OCI-LY7 (cell line): ENCODE measurements at regions of chr4 and their contacts with region 1.

Region 1: DNA sequence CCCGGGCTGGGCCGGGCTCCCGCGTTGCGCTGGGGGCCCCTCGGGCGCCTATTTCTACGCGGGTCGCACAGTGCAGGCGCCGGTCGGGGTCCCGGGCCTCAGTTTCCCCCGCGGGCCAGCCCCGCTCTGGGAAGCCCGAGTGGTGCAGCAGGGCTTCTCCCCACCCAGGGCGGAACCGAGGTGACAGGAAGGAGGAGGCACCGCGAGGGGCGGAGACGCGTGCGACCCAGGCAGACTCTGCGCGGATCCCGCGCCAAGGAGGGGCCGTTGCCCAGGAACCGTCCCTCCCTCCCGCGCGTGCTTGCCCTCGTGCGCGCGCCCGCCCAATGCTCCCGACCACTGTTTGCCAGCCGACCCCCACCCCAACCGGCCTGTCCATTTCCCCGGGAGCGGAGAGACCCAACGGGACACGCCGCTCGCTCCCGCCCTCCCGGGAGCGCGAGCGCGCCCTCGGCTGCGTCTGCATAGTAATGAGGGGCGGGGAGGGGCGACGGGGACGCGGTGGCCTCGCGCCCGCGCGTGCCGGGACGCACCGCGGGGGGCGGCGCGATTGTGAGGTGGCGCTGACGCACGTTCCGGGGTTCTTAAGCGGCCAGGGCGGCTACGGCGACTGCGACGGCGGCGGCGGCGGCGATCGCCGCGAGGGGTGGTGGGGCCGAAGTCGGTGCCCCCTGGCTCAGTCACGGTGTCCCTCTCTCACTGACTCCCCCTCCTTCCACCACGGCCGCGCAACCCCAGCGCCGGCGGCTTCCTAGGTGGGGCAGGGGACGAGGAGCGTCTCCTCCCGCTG is at the start of gene CPEB2:
- DNase-seq: peak; percentile 96
- H3K4me3 ChIP-seq: peak within 1 kb of the TSS; percentile 93
- H3K27ac ChIP-seq: peak within 1 kb of the TSS; percentile 91
- H3K4me1 ChIP-seq: peaks cover 22% of the 10 kb centered on the region
- CTCF ChIP-seq: no peak
- total RNA-seq, gene CPEB2: 2.2 and 2.3 TPM in 2 replicates

Region 2: GRCh38 chr4:13627606-13628301 is 1374.3 kb before region 1 on chr4 and contains the start of gene BOD1L1:
- CTCF ChIA-PET with region 1: interaction called, 3 read pairs
- POLR2A ChIA-PET with region 1: interaction called, 3 read pairs
- intact Hi-C with region 1: loop called (anchors 5 kb)
- DNase-seq: peak; percentile 88
- H3K4me3 ChIP-seq: peak within 1 kb of the TSS; percentile 98
- H3K27ac ChIP-seq: peak within 1 kb of the TSS; percentile 56
- H3K4me1 ChIP-seq: peaks cover 18% of the 10 kb centered on the region
- CTCF ChIP-seq: peak; percentile 50
- total RNA-seq, gene BOD1L1: 24.0 and 38.8 TPM in 2 replicates

Region 3: GRCh38 chr4:14465507-14465906 is 536.6 kb before region 1 on chr4:
- CTCF ChIA-PET with region 1: no interaction called
- POLR2A ChIA-PET with region 1: no interaction called
- intact Hi-C with region 1: no loop called
- DNase-seq: no peak
- H3K4me3 ChIP-seq: no peak overlapping the region
- H3K27ac ChIP-seq: no peak overlapping the region
- H3K4me1 ChIP-seq: no peaks in the 10 kb centered on the region
- CTCF ChIP-seq: no peak

Region 4: DNA sequence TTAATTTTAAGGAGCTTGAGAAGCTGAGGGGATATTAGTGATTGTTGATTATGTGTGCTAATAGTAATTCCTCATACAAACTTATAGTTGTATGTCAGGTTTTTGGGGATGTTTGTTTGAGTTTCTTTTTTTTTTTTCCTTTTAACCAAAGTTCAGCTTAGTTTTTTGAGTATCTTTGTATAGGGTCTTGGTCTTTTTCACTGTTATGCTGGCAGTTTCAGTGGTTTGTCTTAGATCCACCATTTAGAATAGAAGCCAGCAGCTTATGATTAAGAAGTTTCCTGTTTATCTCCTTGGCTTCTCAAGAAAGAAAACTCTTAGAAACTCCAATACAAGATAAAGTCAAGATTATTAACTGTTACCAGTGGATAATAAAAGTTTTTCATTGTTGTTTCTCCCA is 16.3 kb after region 1 on chr4:
- CTCF ChIA-PET with region 1: no interaction called
- POLR2A ChIA-PET with region 1: no interaction called
- intact Hi-C with region 1: no loop called
- DNase-seq: no peak
- H3K4me3 ChIP-seq: no peak overlapping the region
- H3K27ac ChIP-seq: no peak overlapping the region
- H3K4me1 ChIP-seq: no peaks in the 10 kb centered on the region
- CTCF ChIP-seq: no peak

Region 5: DNA sequence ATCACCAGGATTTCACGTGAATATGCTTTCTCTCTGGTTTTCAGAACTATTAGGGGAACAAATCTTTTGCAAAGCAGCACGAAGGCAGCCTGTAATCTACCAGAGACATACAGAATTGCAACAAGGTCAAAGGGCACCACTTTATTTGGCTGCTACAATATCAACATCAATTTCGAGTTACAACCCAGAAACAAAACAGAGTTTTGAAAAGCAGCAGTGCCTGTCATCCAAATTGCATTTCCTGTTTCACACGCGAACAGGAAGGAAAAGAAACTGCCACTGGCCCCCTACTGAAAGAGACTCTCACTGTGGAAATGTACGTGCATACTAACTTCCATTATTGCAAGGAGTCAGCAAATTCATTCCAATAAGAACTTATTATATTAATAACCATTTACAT is 408.7 kb after region 1 on chr4:
- CTCF ChIA-PET with region 1: no interaction called
- POLR2A ChIA-PET with region 1: no interaction called
- intact Hi-C with region 1: loop called (anchors 1 kb)
- DNase-seq: peak; percentile 62
- H3K4me3 ChIP-seq: peak overlapping the region; percentile 34
- H3K27ac ChIP-seq: peak overlapping the region; percentile 19
- H3K4me1 ChIP-seq: peaks cover 41% of the 10 kb centered on the region
- CTCF ChIP-seq: no peak

Region 6: DNA sequence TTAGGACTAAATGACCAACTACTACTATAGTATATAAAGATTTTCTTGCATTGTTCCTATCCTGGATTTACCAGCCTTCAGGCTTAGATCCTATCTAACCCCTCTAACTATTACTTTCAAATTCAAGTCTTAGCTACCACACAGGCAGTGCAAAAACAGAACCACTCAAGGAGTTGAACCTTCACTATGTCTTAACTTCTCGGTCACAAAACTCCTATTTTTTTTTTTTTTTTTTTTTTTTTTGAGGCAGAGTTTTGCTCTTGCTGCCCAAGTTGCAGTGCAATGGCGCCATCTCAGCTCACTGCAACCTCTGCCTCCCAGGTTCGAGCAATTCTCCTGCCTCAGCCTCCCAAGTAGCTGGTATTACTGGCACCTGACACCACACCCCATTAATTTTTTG is 673.3 kb after region 1 on chr4:
- CTCF ChIA-PET with region 1: no interaction called
- POLR2A ChIA-PET with region 1: no interaction called
- intact Hi-C with region 1: loop called (anchors 2 kb)
- DNase-seq: peak; percentile 49
- H3K4me3 ChIP-seq: peak overlapping the region; percentile 90
- H3K27ac ChIP-seq: peak overlapping the region; percentile 82
- H3K4me1 ChIP-seq: peaks cover 83% of the 10 kb centered on the region
- CTCF ChIP-seq: no peak; the same call in 1 of the 2 replicates